Activated T-helper 1 cell treated with anti-CD3 and anti-CD28 coated beads, Interleukin-12 subunit alpha, Interleukin-12 subunit beta, Interleukin-2, Interleukin-4 antibody, amounts not matched to agents 30 ng/mL and 10 ng/mL and 1 ng/mL, durations not matched to agents 14 hours and 24 hours and 36 hours (primary cell): ENCODE measurements at regions of chr7 and their contacts with region 1.

Region 1: GRCh38 chr7:41940760-41941343 is 238.0 kb upstream of the INHBA start:
- DNase-seq: peak; percentile 35
- H3K4me3 Mint-ChIP-seq: no peak overlapping the region
- H3K27ac Mint-ChIP-seq: no peak overlapping the region
- H3K4me1 Mint-ChIP-seq: peaks cover 26% of the 10 kb centered on the region
- H3K27me3 Mint-ChIP-seq: peaks cover 22% of the 10 kb centered on the region

Region 2: GRCh38 chr7:41779918-41780317 is 160.9 kb before region 1 on chr7:
- intact Hi-C with region 1: no loop called
- DNase-seq: no peak
- H3K4me3 Mint-ChIP-seq: no peak overlapping the region
- H3K27ac Mint-ChIP-seq: no peak overlapping the region
- H3K4me1 Mint-ChIP-seq: no peaks in the 10 kb centered on the region
- H3K27me3 Mint-ChIP-seq: no peaks in the 10 kb centered on the region

Region 3: DNA sequence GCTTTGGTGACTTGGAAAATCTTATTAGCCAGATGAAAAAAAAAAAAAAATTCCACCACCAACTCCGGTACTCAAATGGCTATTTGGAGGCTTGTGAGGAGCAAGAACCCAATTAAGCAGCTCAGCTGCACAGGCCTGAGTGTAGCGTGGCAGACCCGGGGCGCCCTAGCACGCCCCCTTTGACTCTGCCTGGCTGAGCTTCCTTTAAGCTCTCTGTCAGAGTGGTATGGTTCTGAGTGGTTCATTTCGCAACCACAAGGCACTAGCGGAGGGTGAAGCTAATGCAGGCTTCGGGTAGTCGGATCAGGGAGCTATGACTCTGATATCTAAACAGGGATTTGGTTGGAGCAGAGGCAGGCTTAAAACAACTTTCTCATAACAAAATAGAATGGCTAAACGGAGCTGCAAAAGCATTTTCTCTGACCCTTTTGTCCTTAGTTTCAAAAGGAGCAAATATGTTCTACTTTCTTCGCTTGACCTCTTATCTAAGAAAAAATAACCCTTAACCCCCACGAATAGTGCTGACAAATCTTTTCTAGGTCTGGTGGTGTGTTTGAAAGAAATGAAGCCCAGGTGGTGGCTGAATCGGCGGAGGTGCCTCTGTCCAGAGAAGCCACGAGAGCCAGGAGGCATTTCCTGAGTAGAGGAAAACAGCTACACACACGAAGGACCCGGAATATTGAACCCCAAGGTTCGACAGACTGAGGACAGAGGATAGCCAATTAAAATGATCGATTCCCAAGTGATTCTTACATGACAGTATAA is 581.6 kb after region 1 on chr7:
- intact Hi-C with region 1: no loop called
- DNase-seq: no peak
- H3K4me3 Mint-ChIP-seq: no peak overlapping the region
- H3K27ac Mint-ChIP-seq: no peak overlapping the region
- H3K4me1 Mint-ChIP-seq: no peaks in the 10 kb centered on the region
- H3K27me3 Mint-ChIP-seq: no peaks in the 10 kb centered on the region

Region 4: DNA sequence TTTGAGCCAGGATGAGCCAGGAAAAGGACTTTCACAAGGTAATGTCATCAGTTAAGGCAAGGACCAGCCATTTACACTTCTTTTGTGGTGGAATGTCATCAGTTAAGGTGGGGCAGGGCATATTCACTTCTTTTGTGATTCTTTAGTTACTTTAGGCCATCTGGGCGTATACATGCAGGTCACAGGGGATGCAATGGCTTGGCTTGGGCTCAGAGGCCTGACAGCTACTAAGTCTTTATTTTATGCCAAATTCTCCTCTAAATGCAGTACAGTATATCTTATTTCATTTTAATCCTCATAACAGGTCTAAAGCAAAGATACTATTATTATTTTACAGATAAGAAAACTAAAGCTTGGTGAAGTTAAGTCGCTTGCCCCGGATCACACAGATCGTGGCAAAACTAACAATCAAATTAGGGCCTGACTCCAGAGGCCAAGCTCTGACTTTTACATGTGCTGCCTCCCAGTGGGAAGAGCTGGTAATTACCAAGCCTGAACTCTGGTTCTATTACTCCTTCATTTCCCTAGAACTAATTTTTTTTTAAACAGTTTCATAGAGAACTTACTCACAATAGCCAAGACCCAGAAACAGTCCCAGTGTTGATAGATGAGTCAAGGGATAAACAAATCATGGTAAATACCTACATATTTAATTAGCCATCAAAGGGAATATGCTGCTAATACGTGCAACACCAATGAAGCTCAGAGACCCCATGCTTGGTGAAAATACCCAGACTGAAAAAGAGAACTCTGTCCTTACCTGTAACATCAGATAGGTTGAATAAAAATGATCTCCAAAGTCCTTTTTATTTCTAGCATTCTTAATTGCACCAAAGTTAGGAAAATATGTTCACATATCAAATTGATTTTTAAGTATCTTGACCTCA is 935.6 kb after region 1 on chr7:
- intact Hi-C with region 1: loop called (anchors 1 kb)
- DNase-seq: peak; percentile 26
- H3K4me3 Mint-ChIP-seq: no peak overlapping the region
- H3K27ac Mint-ChIP-seq: no peak overlapping the region
- H3K4me1 Mint-ChIP-seq: peaks cover 5% of the 10 kb centered on the region
- H3K27me3 Mint-ChIP-seq: peaks cover 1% of the 10 kb centered on the region

Region 5: GRCh38 chr7:42886129-42886528 is 945.3 kb after region 1 on chr7:
- intact Hi-C with region 1: loop called (anchors 2 kb)
- DNase-seq: no peak
- H3K4me3 Mint-ChIP-seq: no peak overlapping the region
- H3K27ac Mint-ChIP-seq: no peak overlapping the region
- H3K4me1 Mint-ChIP-seq: peaks cover 25% of the 10 kb centered on the region
- H3K27me3 Mint-ChIP-seq: peaks cover 7% of the 10 kb centered on the region

Region 6: GRCh38 chr7:43108255-43109011 is 1167.6 kb after region 1 on chr7:
- intact Hi-C with region 1: loop called (anchors 5 kb)
- DNase-seq: peak; percentile 24
- H3K4me3 Mint-ChIP-seq: no peak overlapping the region
- H3K27ac Mint-ChIP-seq: no peak overlapping the region
- H3K4me1 Mint-ChIP-seq: peaks cover 7% of the 10 kb centered on the region
- H3K27me3 Mint-ChIP-seq: peaks cover 49% of the 10 kb centered on the region

Region 7: GRCh38 chr7:43260980-43261878 is 1320.4 kb after region 1 on chr7:
- intact Hi-C with region 1: loop called (anchors 1 kb)
- DNase-seq: peak; percentile 52
- H3K4me3 Mint-ChIP-seq: no peak overlapping the region
- H3K27ac Mint-ChIP-seq: no peak overlapping the region
- H3K4me1 Mint-ChIP-seq: no peaks in the 10 kb centered on the region
- H3K27me3 Mint-ChIP-seq: peaks cover 10% of the 10 kb centered on the region

Region 8: DNA sequence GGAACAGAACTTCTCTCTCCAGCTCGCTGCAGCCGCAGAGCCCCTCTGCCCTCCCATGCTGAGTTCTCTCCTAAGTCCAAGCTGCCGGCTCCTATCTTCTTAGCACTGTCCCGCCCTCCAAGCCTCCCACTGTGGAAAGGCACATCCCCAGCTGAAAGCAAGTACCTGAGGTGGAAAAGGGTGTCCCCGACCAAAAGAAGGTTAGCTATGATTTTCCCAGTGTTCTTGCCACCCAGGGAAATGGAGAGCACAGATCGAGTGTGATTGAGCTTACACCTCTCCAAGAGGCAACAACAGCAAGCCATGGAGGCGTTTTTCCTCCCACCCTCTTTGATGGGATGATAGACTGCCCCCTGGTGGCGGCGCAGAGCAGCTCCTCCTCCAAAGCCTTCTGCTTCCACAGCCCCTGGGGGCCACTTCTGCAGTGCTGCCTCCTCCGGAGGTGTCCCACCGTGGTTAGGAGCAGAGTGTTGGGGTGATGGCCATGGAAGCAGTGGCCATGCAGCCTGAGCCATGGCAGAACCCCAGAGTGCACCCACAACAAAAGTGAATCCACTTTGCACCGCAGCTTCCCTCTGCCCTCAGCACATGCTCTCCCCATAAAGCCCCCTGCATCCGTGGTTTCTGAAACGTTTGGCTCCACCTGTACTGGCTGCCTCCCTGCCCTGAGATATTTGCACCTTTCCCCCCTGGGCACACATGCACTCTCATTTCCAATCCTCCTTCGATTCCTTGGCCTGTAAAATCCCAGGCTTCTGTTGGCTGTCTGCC is 1499.0 kb after region 1 on chr7:
- intact Hi-C with region 1: loop called (anchors 5 kb)
- DNase-seq: peak; percentile 28
- H3K4me3 Mint-ChIP-seq: no peak overlapping the region
- H3K27ac Mint-ChIP-seq: no peak overlapping the region
- H3K4me1 Mint-ChIP-seq: no peaks in the 10 kb centered on the region
- H3K27me3 Mint-ChIP-seq: peaks cover 3% of the 10 kb centered on the region